ENCODE measurements at regions of chr17 and their contacts with region 1.

Region 1: GRCh38 chr17:28710861-28711722 is 596 bp downstream of the PROCA1 start:
- H3K4me3 Mint-ChIP-seq: peak overlapping the region; percentile 77
- H3K27ac Mint-ChIP-seq: peak overlapping the region; percentile 93
- H3K4me1 Mint-ChIP-seq: peaks cover 38% of the 10 kb centered on the region
- H3K27me3 Mint-ChIP-seq: peaks cover 2% of the 10 kb centered on the region

Region 2: DNA sequence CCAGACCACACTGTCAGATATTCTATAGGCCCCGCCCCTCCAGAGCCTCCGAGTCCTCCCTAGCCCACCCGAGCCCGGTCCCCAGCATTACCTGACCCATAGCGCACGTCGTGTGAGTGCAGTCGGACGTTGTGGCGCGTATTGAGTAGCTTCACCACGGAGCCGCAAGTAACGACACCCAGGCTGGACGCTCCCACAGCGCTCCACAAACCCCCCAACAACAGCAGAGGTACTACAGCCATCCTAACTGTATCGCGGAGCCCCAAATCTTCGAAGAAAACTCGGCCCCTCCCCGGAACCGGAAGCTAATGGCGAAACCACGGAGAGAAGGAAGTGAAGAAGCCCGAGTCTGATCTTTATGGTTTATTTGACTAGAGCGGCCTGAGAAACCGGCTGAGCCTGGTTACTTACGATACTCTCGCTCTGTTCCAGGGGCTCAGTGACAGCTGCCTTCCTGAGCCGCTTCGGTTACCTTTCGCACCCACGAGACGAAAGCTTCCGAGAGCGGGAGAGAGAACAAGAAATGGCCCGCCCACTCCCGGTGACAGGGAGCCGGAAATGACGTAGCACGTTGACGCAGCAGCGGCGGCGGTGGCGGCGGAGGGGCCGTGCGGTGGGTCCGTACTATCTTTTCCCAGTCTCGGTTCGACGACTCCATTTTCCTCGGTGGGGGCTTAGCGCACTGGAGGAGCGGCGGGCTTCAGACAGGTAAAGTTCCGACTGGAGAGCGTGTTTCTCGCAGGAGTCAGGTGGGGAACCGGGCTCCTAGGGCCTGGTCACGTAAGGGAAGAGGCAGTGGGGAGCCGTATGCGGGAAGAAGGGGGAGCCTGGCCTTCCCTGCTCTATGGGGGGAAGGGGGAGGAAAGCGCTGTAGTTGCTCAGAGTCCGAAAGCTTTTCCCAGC is 49.2 kb before region 1 on chr17 and contains the starts of genes SDF2 and SUPT6H:
- intact Hi-C with region 1: loop called (anchors 5 kb)
- H3K4me3 Mint-ChIP-seq: peak within 1 kb of the TSS; percentile 99
- H3K27ac Mint-ChIP-seq: peak within 1 kb of the TSS; percentile 98
- H3K4me1 Mint-ChIP-seq: peaks cover 57% of the 10 kb centered on the region
- H3K27me3 Mint-ChIP-seq: no peaks in the 10 kb centered on the region

Region 3: DNA sequence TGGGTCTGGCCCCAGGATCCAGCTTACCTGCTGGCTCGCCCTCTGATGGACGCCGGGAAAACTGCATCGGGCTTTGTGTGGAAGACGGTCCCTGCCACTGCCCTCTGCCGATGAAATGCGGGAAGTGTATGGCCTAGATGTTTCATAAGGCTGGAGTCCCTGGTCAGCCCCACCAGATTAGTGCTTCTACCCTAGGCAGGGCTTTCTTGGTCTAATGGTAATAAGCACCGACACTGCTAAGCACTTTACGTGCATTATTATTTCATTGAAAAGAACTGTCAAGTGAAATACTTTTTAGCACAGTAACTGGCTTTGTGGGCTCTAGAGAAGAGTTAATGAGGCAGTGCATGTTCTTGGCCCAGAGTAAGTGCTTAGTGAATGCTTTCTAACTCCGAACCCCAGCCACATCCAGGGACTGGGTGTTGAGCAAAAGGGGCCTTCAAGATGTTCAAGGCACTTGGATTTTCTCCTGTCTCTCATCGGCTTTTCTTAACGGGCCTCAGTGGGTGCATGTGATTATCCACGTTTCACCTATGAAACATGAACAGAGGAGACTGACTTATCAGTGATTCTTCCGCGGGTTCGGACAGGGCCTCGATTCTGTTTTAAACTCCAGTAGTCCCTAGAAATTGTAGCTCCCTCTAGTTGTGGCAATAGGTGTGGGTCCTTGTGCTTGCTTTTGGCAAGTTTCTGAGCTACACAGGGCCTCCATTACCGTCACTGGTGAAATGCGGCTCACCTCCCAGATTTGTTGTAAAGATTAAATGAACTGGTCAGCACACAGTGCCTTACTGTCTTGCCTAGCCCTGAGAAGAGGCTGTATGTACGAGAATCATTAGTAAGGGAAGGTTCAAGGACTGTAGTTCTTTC is 39.3 kb after region 1 on chr17:
- intact Hi-C with region 1: no loop called
- H3K4me3 Mint-ChIP-seq: no peak overlapping the region
- H3K27ac Mint-ChIP-seq: no peak overlapping the region
- H3K4me1 Mint-ChIP-seq: peaks cover 19% of the 10 kb centered on the region
- H3K27me3 Mint-ChIP-seq: no peaks in the 10 kb centered on the region